CD8-positive, alpha-beta memory T cell (primary cell): ENCODE measurements at regions of chr11 and their contacts with region 1.

Region 1: DNA sequence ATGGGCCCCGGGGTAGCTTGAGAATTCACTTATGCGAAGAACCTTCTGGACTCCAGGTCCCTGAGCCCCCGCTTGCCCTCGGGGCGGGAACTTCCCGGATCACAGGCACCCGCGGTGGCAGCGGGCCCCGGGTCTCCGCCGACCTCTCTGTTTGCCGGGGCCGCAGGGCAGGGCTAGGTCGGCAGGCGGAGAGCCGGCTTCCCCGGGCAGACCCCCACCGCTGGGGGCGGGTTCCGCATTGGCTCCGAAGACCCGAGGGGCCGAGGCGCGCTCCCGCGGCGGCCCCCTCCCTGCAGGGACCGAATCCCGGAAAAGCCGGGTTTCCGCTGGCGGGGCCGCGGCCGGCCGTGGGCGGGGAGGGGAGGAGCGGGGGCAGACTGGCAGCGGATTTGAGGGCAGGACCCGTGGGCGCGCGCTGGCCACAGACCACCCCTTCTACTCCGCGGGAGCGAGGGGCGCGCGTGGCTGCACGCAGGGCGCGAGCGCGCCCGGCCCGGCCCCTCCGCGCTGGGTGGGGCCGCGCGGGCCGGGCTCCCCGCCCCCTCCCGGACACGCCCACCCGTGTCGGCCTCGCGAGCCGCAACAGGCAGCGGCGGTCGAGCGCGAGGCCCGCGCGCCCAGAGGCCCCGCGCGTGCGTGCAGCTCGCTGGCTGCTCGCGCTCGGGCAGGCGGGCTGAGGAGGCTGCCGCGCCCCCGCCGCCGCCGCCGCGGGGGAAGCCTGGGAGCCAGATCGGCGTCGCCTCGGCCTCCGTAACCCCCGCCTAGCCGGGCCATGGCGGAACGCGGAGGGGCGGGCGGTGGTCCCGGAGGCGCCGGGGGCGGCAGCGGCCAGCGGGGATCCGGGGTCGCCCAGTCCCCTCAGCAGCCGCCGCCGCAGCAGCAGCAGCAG is at the start of gene PACS1:
- DNase-seq: peak; percentile 76 to 88 (median 81)
- H3K4me3 ChIP-seq: peak within 1 kb of the TSS; percentile 76
- H3K4me3 Mint-ChIP-seq: peak within 1 kb of the TSS; percentile 93 to 98 (median 95)
- H3K27ac ChIP-seq: peak within 1 kb of the TSS; percentile 59
- H3K27ac Mint-ChIP-seq: peak within 1 kb of the TSS; percentile 89 to 99 (median 96)
- H3K4me1 ChIP-seq: peaks cover 35% of the 10 kb centered on the region
- H3K4me1 Mint-ChIP-seq: peaks cover 58 to 73% (median 65%) of the 10 kb centered on the region in 3 donors
- H3K27me3 ChIP-seq: no peaks in the 10 kb centered on the region
- H3K27me3 Mint-ChIP-seq: peaks cover 0 to 3% of the 10 kb centered on the region in 2 donors
- total RNA-seq, gene PACS1: 73.3 to 77.4 TPM

Region 2: GRCh38 chr11:66051766-66052663 is 17.9 kb before region 1 on chr11 and contains the start of gene SF3B2:
- CTCF ChIA-PET with region 1: interaction called, 21 read pairs
- POLR2A ChIA-PET with region 1: interaction called, 7 read pairs
- DNase-seq: peak; percentile 93 to 97 (median 95)
- H3K4me3 ChIP-seq: peak within 1 kb of the TSS; percentile 79
- H3K4me3 Mint-ChIP-seq: peak within 1 kb of the TSS; percentile 98 to 100 (median 99)
- H3K27ac ChIP-seq: peak within 1 kb of the TSS; percentile 86
- H3K27ac Mint-ChIP-seq: peak within 1 kb of the TSS; percentile 96 to 99 (median 99)
- H3K4me1 ChIP-seq: peaks cover 23% of the 10 kb centered on the region
- H3K4me1 Mint-ChIP-seq: peaks cover 27 to 38% (median 34%) of the 10 kb centered on the region in 3 donors
- H3K27me3 ChIP-seq: no peaks in the 10 kb centered on the region
- H3K27me3 Mint-ChIP-seq: peaks cover 4 to 6% of the 10 kb centered on the region in 2 donors
- total RNA-seq, gene SF3B2: 261 to 274 TPM

Region 3: DNA sequence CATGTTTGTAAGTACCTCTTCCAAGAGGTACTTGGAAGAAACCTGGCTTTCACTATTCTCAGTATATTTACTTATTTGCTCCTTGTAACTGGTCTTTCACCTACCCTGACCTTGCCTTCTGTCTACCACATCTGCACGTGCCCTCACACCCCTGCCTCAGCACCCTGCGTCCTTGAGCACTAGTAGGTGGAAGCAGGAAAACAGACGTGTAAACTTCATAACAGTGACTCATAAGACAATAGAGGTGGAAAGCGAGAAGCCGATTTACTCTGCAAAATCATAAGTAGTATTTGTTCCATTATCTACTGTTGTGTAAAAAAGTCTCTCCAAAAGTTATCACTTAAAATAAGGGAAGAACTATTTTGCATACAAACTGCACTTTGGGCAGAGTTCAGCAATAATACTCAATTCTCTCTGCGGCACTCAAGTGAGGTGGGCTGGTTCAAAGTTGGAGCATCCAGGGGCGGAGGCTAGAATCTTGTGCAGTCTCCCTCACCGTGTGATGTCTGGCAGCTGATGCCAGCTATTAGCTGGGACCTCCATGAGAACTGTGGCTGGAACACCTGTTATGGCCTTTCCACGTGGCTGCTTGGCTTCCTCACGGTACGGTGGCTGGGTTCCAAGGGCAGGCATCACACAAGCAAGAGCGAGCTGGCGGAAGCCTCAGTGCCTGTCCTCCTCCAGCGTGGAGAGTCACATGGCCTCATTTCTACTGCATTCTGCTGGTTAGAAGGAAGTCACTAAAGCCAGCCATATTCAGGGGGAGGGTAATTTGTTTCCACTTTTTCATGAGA is 30.5 kb after region 1 on chr11:
- CTCF ChIA-PET with region 1: interaction called, 37 read pairs
- POLR2A ChIA-PET with region 1: interaction called, 4 read pairs
- DNase-seq: peak; percentile 51 to 81 (median 69)
- H3K4me3 ChIP-seq: peak overlapping the region; percentile 52
- H3K4me3 Mint-ChIP-seq: peak overlapping the region; percentile 77 to 91 (median 84)
- H3K27ac ChIP-seq: peak overlapping the region; percentile 8
- H3K27ac Mint-ChIP-seq: peak overlapping the region; percentile 71 to 100 (median 90)
- H3K4me1 ChIP-seq: peaks cover 57% of the 10 kb centered on the region
- H3K4me1 Mint-ChIP-seq: peaks cover 54 to 76% (median 67%) of the 10 kb centered on the region in 3 donors
- H3K27me3 ChIP-seq: no peaks in the 10 kb centered on the region
- H3K27me3 Mint-ChIP-seq: no peaks in the 10 kb centered on the region

Region 4: GRCh38 chr11:66126808-66127555 is 57.0 kb after region 1 on chr11:
- CTCF ChIA-PET with region 1: interaction called, 76 read pairs
- POLR2A ChIA-PET with region 1: interaction called, 6 read pairs
- DNase-seq: peak; percentile 7 to 71 (median 49)
- H3K4me3 ChIP-seq: peak overlapping the region; percentile 0
- H3K4me3 Mint-ChIP-seq: peak overlapping the region in 6 of 7 donors; percentile 45 to 82 (median 72)
- H3K27ac ChIP-seq: no peak overlapping the region
- H3K27ac Mint-ChIP-seq: peak overlapping the region; percentile 82 to 97 (median 92)
- H3K4me1 ChIP-seq: peaks cover 67% of the 10 kb centered on the region
- H3K4me1 Mint-ChIP-seq: peaks cover 72 to 84% (median 82%) of the 10 kb centered on the region in 3 donors
- H3K27me3 ChIP-seq: no peaks in the 10 kb centered on the region
- H3K27me3 Mint-ChIP-seq: no peaks in the 10 kb centered on the region